CD4-positive, alpha-beta memory T cell (primary cell): ENCODE measurements at regions of chr3 and their contacts with region 1.

Region 1: DNA sequence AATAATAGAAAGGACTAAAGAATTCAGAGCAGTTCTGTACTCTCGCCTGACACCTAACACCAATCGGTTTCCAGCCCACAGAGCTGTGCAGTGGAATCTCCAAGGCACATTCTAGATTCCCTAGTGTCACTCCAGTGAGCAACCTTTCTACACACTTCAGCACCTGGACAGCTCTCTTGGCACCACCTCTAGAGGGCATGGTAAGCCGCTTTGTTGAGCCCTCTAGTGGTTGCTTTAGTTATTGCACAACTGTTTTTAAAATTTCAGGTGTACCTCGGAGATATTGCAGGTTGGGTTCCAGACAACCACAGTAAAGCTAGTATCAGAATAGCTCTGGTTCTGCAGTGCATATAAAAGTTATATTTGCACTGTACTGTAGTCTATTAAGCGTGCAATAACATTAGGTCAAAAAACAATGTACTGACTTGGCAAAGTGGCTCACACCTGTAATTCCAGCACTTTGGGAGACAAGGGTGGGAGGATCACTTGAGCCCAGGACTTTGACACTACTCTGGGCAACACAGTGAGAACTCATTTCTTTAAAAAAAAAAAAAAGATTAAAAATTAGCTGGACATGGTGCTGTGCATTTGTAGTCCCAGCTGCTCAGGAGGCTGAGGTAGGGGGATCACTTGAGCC is 26.5 kb upstream of the ERC2 start:
- DNase-seq: peak; percentile 78 to 83 (median 80)
- H3K4me3 ChIP-seq: no peak overlapping the region
- H3K4me3 Mint-ChIP-seq: no peak overlapping the region
- H3K27ac ChIP-seq: no peak overlapping the region
- H3K27ac Mint-ChIP-seq: peak overlapping the region in 1 of 7 donors; percentile 4
- H3K4me1 ChIP-seq: no peaks in the 10 kb centered on the region
- H3K4me1 Mint-ChIP-seq: no peaks in the 10 kb centered on the region
- H3K27me3 ChIP-seq: no peaks in the 10 kb centered on the region
- H3K27me3 Mint-ChIP-seq: peaks cover 18 to 22% of the 10 kb centered on the region in 2 donors

Region 2: DNA sequence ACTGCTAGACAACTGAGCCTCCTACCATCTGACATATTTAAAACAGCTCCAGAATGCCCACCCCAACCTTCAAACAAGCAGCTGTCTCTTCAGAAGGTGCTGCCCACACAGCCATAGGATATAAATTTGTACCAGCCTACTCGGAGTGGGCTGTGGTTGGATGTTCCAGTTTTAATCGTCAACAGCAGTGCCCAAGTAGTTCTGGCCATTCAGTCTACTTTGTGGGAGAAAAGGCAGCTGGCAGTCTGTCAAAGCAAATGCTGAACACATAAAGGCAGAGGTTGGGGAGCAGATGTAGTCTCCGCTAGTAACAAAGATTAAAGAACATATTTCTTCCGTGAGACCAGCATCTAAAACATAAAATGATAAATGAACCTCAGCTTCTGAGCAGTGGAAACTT is 10.7 kb before region 1 on chr3:
- CTCF ChIA-PET with region 1: interaction called, 15 read pairs
- POLR2A ChIA-PET with region 1: interaction called, 3 read pairs
- intact Hi-C with region 1: no loop called
- DNase-seq: no peak
- H3K4me3 ChIP-seq: no peak overlapping the region
- H3K4me3 Mint-ChIP-seq: no peak overlapping the region
- H3K27ac ChIP-seq: no peak overlapping the region
- H3K27ac Mint-ChIP-seq: no peak overlapping the region
- H3K4me1 ChIP-seq: no peaks in the 10 kb centered on the region
- H3K4me1 Mint-ChIP-seq: no peaks in the 10 kb centered on the region
- H3K27me3 ChIP-seq: no peaks in the 10 kb centered on the region
- H3K27me3 Mint-ChIP-seq: peaks cover 17 to 18% of the 10 kb centered on the region in 2 donors